ENCODE measurements at regions of chr20 and their contacts with region 1.

Region 1: DNA sequence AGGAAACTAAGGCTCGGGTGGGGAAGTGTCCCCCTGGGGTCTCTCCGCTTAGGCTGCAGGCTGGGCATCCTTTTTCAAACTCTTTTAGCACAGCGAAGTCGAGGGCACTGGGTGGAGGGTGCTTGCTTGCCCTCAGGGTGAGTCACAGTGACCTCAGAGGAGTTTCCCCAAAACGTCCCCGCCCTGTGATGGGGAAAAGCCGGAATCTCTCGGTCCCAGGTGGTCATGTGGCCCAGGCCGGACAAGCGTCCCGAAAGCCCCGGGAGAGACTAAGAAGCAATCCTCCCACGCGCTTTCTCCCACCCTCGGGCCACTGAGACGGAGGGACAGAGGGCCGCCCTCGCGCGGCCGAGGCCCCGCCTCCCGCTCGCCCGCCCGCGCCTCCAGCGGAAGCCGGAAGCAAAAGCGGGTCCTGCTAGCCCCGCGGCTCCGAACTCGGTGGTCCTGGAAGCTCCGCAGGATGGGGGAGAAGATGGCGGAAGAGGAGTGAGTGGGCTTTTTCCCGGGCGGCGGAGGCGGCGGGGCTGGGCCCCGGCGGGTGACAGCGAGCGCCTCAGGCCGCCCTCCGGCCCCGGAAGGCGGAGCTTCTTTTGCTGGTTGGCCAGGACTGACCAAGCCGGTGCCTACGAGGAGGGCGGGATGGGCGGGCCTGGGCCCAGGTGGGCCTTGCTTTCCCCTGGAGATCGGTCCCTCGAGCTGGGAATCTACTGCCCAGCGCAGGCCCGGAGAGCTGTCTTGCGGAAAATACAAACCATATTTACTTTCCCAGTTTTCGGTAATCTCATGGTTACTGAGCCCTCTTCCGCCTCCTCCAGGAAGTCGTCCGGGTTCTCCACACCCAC is at the start of gene SLC9A8:
- DNase-seq: peak; percentile 92
- H3K4me3 Mint-ChIP-seq: peak within 1 kb of the TSS; percentile 89
- H3K27ac Mint-ChIP-seq: peak within 1 kb of the TSS; percentile 94
- H3K4me1 Mint-ChIP-seq: peaks cover 34% of the 10 kb centered on the region
- H3K27me3 Mint-ChIP-seq: no peaks in the 10 kb centered on the region
- total RNA-seq, gene SLC9A8: 11.5 to 13.0 TPM

Region 2: GRCh38 chr20:49713753-49714712 is 98.7 kb before region 1 on chr20 and contains the start of gene B4GALT5:
- CTCF ChIA-PET with region 1: interaction called, 3 read pairs
- POLR2A ChIA-PET with region 1: no interaction called
- intact Hi-C with region 1: loop called (anchors 5 kb)
- DNase-seq: peak; percentile 69
- H3K4me3 Mint-ChIP-seq: peak within 1 kb of the TSS; percentile 86
- H3K27ac Mint-ChIP-seq: peak within 1 kb of the TSS; percentile 83
- H3K4me1 Mint-ChIP-seq: peaks cover 45% of the 10 kb centered on the region
- H3K27me3 Mint-ChIP-seq: no peaks in the 10 kb centered on the region
- total RNA-seq, gene B4GALT5: 20.9 to 21.4 TPM

Region 3: DNA sequence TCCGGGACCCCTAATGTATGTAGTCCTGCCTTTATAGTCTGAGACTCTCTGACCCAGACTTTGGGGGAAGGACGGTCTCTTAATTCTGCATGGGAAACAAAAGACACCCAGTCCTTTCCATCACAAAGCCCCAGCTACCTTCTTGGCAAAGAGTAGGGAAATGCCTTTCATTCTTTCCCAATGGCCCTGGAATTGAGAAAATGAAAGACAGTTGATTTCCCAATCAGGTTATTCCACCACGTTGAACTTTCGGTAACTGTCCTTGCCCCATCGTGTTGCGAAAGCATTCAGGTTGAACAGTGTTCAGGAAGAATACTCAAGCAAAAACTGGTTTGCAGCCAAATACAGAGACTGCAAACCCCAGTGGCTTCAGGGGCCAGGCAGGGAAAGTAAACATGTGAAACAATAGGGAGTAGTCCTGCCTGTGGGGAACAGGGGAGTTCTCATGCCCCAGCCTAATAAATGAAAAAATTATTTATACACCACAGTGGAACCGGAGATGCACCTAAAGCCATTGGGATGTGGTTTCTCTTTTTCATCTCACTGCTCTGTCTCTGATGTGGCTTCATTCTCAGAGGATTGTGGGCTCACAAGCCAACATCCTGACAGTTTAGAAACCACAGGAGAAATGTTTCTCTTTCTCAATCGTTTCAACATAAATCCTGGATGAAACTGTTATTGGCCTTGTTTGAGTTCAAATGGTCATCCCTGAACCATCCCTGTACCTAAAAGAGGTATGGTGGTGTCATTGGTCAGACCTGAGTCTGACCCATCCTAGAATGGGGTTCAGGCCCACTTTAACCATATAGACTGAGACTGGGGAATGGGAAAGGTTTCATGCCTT is 44.3 kb before region 1 on chr20:
- CTCF ChIA-PET with region 1: no interaction called
- POLR2A ChIA-PET with region 1: no interaction called
- intact Hi-C with region 1: no loop called
- DNase-seq: peak; percentile 19
- H3K4me3 Mint-ChIP-seq: no peak overlapping the region
- H3K27ac Mint-ChIP-seq: peak overlapping the region; percentile 33
- H3K4me1 Mint-ChIP-seq: peaks cover 24% of the 10 kb centered on the region
- H3K27me3 Mint-ChIP-seq: peaks cover 58% of the 10 kb centered on the region

Region 4: DNA sequence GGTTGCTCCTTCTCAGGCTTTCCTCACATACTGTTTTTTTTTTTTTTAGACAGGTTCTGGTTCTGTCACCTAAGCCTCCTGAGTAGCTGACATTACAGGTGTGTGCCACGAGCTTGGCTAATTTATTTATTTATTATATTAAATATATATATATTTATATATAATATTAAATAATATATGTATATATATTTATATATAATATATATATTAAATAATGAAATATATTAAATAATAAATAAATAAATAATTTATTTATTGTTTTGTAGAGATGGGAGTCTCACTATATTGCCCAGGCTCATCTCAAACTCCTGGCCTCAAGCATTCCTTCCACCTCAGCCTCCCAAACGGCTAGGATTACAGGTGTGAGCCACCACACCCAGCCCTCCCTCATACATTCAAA is 28.4 kb before region 1 on chr20:
- CTCF ChIA-PET with region 1: no interaction called
- POLR2A ChIA-PET with region 1: no interaction called
- intact Hi-C with region 1: no loop called
- DNase-seq: no peak
- H3K4me3 Mint-ChIP-seq: no peak overlapping the region
- H3K27ac Mint-ChIP-seq: no peak overlapping the region
- H3K4me1 Mint-ChIP-seq: peaks cover 4% of the 10 kb centered on the region
- H3K27me3 Mint-ChIP-seq: peaks cover 3% of the 10 kb centered on the region

Measured in activated CD4-positive, alpha-beta memory T cell treated with anti-CD3 and anti-CD28 coated beads for 36 hours (primary cell).